ENCODE measurements at regions of chr6 and their contacts with region 1.

Region 1: DNA sequence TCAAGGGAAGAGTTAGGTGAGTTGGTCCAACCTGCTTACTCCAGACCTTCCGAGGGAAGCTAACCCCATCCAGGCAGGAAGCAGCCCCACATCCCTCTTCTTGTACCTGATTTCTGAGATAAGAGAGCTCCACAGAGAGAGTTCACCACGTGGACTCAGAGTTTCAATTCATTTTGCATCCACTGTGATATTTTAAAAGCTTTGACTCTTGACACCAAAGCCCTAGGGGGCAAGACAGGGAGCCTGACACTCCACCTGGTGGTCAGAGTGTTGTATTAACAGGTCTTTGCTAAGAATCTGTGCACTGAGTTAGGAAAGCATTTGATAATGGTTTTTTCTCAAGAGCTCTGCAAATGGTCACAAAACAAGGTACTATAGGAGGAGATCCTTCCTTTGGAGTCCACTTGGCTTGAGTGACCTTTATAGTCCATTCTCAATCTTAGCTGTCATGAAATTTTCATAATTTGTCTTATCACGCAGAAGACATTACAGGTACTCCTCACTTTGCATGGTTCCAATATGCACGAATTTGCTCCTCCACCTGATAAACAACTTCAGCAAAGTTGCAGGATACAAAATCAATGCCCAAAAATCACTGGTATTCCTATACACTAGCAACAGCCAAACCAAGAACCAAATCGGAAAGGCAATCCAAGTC is 56.2 kb upstream of the RIPOR2 start:
- DNase-seq: peak; percentile 86
- H3K4me3 Mint-ChIP-seq: peak overlapping the region; percentile 15
- H3K27ac Mint-ChIP-seq: peak overlapping the region; percentile 85
- H3K4me1 Mint-ChIP-seq: peaks cover 65% of the 10 kb centered on the region
- H3K27me3 Mint-ChIP-seq: no peaks in the 10 kb centered on the region

Region 2: DNA sequence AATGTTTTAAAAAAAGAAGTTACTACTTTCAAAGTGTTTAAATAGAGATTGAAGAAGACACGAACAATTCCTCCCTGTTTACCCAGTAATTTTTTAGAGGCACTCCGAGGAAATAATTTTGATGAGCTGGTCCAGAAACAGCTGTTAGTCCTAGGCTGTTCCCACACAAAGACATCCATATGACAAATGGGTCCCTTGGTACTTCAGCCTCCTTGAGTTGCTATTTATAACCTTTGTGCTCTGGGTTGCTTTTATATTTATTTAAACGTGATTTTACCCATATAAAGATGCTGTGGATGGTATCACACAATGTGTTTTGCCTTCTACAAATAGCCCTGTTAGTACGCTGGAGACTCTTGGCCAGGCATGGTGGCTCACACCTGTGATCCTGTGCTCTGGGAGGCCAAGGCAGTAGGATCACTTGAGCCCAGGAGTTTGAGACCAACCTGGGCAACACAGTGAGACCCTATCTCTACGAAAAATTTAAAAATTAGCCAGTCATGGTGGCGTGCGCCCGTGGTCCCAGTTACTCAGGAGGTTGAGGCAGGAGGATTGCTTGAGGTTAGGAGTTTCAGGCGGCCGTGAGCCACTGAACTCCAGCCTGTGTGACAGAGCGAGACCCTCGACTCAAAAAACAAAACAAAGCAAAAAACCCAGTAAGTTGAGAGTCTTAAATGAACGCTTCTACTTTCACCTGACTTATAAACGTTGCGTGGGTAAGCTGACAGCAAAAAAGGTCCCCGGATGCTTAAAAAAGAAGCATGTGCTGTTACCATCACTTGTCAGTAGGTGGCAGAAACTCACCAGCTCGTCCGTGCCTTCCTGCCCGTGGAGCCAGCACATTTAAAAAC is 136.3 kb before region 1 on chr6:
- CTCF ChIA-PET with region 1: interaction called, 100 read pairs
- DNase-seq: peak; percentile 75
- H3K4me3 Mint-ChIP-seq: no peak overlapping the region
- H3K27ac Mint-ChIP-seq: peak overlapping the region; percentile 97
- H3K4me1 Mint-ChIP-seq: peaks cover 52% of the 10 kb centered on the region
- H3K27me3 Mint-ChIP-seq: no peaks in the 10 kb centered on the region

Region 3: GRCh38 chr6:24910961-24911712 is 80.8 kb before region 1 on chr6:
- CTCF ChIA-PET with region 1: interaction called, 52 read pairs
- DNase-seq: peak; percentile 66
- H3K4me3 Mint-ChIP-seq: peak overlapping the region; percentile 92
- H3K27ac Mint-ChIP-seq: peak overlapping the region; percentile 93
- H3K4me1 Mint-ChIP-seq: peaks cover 94% of the 10 kb centered on the region
- H3K27me3 Mint-ChIP-seq: no peaks in the 10 kb centered on the region

Region 4: DNA sequence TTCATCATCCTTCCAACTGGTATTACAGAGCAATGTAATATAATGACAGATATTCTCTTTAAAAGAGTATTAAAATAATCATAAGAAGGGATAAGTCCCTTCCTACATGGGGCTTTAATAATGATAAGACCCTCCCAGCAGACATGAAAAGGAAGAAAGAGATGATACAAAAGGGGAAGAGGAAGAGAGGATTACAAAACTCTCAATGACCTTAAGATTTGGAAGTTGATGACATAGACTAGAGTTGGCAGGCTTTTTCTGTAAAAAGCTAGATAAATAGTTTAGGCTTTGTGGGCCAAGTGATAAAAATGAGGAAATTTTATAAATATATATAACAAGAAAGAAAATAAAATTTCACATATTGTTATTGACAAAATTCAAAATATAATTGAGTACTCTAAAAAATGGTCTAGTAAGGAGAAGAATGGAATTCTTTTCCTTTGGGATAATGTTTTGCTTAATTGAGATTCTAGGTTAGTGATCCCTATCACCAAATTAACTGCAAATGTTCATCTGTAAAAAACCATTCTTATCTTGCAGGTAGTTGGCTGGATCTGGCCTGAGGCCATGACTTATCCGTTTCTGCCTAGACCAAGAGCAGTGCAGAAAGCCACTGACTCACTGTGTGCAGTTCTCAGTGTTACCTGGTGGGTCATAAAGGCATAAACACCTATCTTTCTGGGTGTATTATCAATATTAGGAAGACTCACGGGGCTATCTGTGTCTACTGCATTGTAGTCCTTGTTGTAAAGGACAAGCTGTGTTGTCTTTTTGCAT is 67.2 kb before region 1 on chr6:
- CTCF ChIA-PET with region 1: interaction called, 39 read pairs
- DNase-seq: peak; percentile 47
- H3K4me3 Mint-ChIP-seq: peak overlapping the region; percentile 64
- H3K27ac Mint-ChIP-seq: peak overlapping the region; percentile 87
- H3K4me1 Mint-ChIP-seq: peaks cover 85% of the 10 kb centered on the region
- H3K27me3 Mint-ChIP-seq: no peaks in the 10 kb centered on the region

Region 5: DNA sequence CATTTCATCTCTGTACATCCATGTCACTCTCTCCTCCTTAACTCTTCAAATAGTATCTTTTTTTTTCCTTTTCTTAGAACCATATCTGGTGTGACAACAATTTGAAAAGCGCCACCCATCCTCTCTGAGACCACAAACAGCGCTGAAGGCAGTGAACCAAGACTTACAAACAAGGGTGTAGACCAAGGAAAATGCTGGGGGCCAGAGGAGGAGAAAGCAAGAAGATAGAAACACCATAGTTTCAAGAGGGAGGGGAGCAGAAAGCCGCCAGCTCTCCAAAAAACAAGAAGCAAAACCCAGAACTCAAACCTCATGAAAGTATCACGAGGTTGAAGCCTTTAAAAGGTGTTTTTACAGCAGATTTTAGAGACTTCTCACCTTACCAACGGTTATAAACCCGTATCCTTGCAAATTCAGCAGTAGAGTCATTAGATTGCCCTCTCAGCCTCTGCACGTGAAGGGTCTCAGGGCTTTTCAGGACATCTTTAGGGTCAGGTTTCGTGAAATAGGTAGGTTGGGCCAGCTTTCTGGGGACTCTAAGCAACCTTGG is 42.8 kb before region 1 on chr6:
- CTCF ChIA-PET with region 1: interaction called, 44 read pairs
- DNase-seq: peak; percentile 89
- H3K4me3 Mint-ChIP-seq: peak overlapping the region; percentile 29
- H3K27ac Mint-ChIP-seq: peak overlapping the region; percentile 95
- H3K4me1 Mint-ChIP-seq: peaks cover 84% of the 10 kb centered on the region
- H3K27me3 Mint-ChIP-seq: no peaks in the 10 kb centered on the region

Region 6: DNA sequence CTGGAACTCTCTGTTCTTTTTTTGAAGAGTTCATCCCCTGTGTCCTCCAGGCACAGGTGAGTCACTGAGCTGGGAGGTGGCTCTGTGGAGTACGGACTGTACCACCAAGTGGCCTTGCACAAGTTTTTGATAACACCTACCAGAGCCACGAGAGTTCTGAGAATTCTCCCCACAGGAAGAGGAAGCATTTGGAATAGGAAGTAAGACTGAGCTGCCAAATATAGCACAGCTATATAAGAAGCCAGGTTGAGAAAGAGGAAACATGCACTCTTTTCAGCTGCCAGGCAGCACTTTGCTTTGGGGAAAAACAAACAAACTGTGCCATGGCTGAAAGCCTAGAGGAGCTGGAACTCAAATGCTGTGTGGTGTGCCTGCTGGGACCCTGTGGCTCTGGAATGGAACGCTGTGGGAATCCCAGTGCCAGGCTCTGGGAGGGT is 14.6 kb after region 1 on chr6:
- CTCF ChIA-PET with region 1: interaction called, 40 read pairs
- DNase-seq: peak; percentile 77
- H3K4me3 Mint-ChIP-seq: peak overlapping the region; percentile 41
- H3K27ac Mint-ChIP-seq: peak overlapping the region; percentile 89
- H3K4me1 Mint-ChIP-seq: peaks cover 95% of the 10 kb centered on the region
- H3K27me3 Mint-ChIP-seq: no peaks in the 10 kb centered on the region

Region 7: DNA sequence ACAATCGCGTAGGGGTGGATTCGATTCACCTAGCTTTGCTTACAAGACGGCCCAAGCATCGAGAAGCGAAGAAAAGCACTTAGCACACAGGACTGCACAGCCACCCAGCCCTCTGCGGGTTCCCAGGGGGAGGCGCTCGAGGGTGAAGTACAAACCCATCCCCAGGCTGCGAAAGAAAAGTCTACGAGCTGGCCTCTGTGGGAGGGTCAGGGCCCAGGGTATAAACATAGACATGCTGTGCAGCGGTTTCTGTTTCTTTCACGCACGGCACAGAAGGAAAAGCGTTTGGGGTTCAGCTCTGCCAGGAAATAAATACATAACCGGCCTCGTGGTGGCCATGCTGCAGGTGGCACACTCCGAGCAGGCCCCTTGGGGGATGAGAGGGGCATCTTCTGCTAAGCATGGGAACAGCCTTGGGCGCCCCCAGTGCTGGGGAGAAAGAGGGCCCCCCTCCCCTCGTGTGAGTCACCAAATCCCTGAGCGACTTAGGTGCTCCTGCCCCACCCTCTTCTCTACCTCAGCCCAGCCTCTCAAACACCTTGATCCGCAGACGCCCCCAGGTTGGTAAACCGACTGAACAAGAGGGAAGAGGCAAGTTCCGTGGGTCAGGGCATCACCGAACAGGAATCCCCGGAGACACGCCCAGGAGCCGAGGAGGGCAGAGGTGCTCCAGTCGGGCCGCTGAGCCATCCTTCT is 35.4 kb after region 1 on chr6:
- CTCF ChIA-PET with region 1: interaction called, 15 read pairs
- DNase-seq: peak; percentile 88
- H3K4me3 Mint-ChIP-seq: peak overlapping the region; percentile 62
- H3K27ac Mint-ChIP-seq: peak overlapping the region; percentile 92
- H3K4me1 Mint-ChIP-seq: peaks cover 53% of the 10 kb centered on the region
- H3K27me3 Mint-ChIP-seq: no peaks in the 10 kb centered on the region